AG04449 (cell line): ENCODE measurements at regions of chr19 and their contacts with region 1.

Region 1: GRCh38 chr19:49391581-49392399 is 3.7 kb downstream of the KASH5 start:
- DNase-seq: no peak
- H3K4me3 ChIP-seq: no peak overlapping the region
- CTCF ChIP-seq: peak; percentile 81

Region 2: GRCh38 chr19:49378512-49378911 is 13.3 kb before region 1 on chr19:
- CTCF ChIA-PET with region 1: interaction called, 18 read pairs
- POLR2A ChIA-PET with region 1: no interaction called
- DNase-seq: no peak
- H3K4me3 ChIP-seq: no peak overlapping the region
- CTCF ChIP-seq: no peak

Region 3: GRCh38 chr19:49407482-49408015 is 15.8 kb after region 1 on chr19:
- CTCF ChIA-PET with region 1: interaction called, 13 read pairs
- POLR2A ChIA-PET with region 1: no interaction called
- DNase-seq: no peak
- H3K4me3 ChIP-seq: no peak overlapping the region
- CTCF ChIP-seq: no peak

Region 4: DNA sequence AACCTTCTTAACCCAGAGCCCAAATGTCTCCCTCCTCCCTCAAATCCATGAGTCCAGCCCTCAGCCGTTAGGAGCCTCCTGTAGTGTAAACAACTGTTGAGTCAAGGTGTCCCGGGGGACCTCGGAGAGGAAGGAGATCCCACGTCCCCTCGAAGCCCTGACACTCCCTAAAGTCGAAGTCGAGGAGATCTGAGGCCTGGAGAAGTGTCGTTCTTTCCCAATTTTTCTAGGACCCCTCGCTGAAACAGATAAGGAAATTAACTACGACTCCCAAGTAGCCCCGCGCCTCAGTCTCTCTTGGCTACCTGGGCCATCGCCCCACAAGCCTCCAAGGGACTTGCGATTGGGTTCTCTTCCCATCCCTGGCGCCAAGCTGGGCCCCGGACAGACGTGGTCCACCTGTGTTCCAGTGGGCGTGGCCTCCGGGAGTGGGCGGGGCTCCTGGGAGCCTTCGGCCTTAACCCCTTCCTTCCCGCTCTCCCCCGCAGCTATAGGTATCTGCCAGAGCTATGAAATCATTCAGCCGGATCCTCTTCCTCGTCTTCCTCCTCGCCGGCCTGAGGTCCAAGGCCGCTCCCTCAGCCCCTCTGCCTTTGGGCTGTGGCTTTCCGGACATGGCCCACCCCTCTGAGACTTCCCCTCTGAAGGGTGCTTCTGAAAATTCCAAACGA is 34.3 kb after region 1 on chr19:
- CTCF ChIA-PET with region 1: interaction called, 10 read pairs
- POLR2A ChIA-PET with region 1: no interaction called
- DNase-seq: no peak
- H3K4me3 ChIP-seq: no peak overlapping the region
- CTCF ChIP-seq: no peak

Region 5: GRCh38 chr19:49443366-49444099 is 51.7 kb after region 1 on chr19:
- CTCF ChIA-PET with region 1: interaction called, 50 read pairs
- POLR2A ChIA-PET with region 1: no interaction called
- DNase-seq: peak; percentile 50
- H3K4me3 ChIP-seq: peak overlapping the region; percentile 69
- CTCF ChIP-seq: peak; percentile 99